PC-9 (cell line): ENCODE measurements at regions of chr2 and their contacts with region 1.

Region 1: DNA sequence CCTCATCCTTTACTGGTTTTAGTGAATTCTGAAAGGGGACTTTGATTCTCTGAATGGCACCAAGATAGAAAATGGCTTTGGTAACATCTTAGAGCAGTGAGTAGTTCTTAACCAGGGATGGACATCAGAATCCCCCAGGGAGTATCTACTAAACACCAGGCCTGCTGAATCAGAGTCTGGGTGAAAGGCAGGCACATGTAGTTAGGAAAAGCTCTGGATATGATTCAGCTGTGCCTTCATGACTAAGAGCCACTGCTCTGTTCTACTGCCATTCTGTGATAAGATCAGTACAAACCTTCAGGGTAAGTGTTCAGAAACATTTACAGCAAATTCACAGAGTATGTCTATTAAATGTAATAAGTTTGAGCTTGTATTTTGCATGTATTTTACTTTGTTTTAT is 46.2 kb upstream of the B3GNT2 start:
- DNase-seq: peak; percentile 20 to 83
- H3K4me3 ChIP-seq: no peak overlapping the region
- H3K27ac ChIP-seq: peak overlapping the region; percentile 69
- H3K4me1 ChIP-seq: peaks cover 39% of the 10 kb centered on the region
- H3K27me3 ChIP-seq: no peaks in the 10 kb centered on the region
- CTCF ChIP-seq: no peak

Region 2: DNA sequence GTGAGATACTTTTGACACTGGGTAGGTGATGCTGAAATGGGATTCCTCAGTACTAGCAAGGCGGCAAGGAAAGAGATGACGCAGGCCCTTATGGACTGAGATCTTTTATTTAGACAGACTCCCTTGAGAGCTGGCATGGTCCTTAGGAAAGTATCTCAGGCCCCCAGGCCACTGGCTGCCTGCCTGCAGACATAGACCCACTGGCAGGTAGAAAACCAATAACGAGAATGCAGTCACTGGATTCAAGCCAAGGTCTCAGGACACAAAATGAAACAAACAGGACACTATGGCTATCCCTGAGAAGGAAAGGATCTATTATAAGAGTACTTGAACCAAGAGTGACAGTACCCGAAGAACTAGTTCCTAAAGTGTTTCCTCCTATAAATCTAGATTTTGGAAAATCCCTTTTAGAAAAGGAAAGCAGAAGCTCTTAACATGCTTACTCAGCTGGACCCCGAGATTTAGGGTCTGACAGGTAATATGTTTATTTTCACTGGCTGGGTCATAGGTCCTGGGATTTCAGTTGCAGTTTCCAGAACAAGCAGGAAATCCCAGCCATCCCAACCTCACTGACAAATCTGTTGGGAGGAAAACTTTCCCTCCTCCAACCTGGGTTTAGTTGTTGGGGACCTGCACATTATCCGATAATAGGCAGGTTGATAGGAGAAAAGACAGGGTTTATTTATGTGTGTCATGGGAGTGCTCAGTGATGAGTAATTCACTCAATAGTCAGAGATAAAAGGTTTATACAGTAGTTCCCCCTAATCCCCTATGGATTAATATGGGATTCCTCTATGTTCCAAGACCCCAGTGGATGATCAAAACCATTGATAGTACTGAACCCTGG is 199.8 kb before region 1 on chr2:
- CTCF ChIA-PET with region 1: no interaction called
- POLR2A ChIA-PET with region 1: no interaction called
- intact Hi-C with region 1: no loop called
- DNase-seq: no peak
- H3K4me3 ChIP-seq: no peak overlapping the region
- H3K27ac ChIP-seq: no peak overlapping the region
- H3K4me1 ChIP-seq: peaks cover 9% of the 10 kb centered on the region; the same call in 1 of the 2 replicates
- H3K27me3 ChIP-seq: no peaks in the 10 kb centered on the region
- CTCF ChIP-seq: no peak

Region 3: DNA sequence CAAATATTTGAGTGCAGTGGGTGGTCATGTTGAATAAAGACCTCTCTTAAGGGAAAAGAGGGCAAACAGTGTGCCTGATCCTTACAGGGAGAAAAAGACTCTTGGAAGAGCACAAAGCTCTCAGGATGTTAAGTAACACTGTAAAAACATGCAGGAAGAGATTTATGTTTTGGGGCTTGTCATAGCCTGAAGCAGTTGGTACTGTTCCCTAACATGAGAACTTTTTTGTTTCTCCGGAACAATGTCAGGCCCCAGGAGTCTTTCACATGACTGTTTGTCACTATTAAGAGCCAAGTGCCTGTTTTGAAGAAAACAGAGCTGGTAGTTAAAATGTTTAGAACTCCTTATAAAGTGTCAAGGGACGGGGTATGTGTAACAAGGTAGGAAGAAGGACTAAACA is 37.5 kb before region 1 on chr2:
- CTCF ChIA-PET with region 1: interaction called, 10 read pairs
- POLR2A ChIA-PET with region 1: interaction called, 4 read pairs
- intact Hi-C with region 1: no loop called
- DNase-seq: no peak
- H3K4me3 ChIP-seq: no peak overlapping the region
- H3K27ac ChIP-seq: no peak overlapping the region
- H3K4me1 ChIP-seq: no peaks in the 10 kb centered on the region
- H3K27me3 ChIP-seq: no peaks in the 10 kb centered on the region
- CTCF ChIP-seq: no peak

Region 4: DNA sequence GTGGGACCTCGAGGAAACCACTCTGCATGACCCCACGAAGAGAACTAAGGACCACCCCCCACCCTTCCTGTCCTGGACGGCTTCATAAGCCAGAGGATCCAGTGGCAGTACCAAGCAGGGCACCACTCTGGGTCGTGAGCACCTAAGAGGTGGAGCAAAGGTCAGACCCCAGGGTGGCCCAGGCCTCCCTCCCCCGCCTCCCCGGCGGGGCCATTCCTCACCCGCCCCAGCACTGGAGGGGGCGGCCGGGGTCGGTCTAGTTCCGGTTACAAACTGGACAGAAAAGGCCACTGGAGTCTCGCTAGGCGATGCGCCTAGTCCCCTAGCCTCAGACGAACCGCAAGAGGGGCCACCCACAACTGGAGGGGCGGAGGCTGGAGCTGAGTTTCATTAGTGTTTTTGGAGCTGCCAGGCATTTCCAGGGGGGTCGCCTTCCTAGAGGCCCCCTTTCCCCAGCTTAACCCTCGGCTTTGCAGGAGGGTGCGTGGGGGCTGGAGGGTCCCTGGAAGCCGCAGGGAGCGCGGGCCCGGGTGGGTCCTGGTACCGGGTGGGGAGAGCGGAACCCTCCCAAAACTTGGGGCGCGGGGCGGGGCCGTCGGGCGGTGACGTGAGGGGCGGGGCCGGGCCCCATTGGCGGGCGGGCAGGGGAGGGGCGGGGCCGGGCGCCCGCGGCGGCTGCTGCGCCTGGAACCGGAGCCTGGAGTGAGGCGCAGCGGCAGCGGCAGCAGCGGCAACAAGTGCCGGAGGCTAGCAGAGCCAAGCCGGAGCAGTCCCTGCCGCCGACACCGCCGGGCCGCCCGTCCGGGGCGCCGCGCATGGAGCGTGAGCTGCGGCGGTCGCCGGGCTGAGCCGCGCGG is 45.9 kb after region 1 on chr2 and contains the start of gene B3GNT2:
- CTCF ChIA-PET with region 1: no interaction called
- POLR2A ChIA-PET with region 1: interaction called, 11 read pairs
- intact Hi-C with region 1: no loop called
- DNase-seq: peak; percentile 56 to 82
- H3K4me3 ChIP-seq: peak within 1 kb of the TSS; percentile 98
- H3K27ac ChIP-seq: peak within 1 kb of the TSS; percentile 70
- H3K4me1 ChIP-seq: peaks cover 29% of the 10 kb centered on the region
- H3K27me3 ChIP-seq: no peaks in the 10 kb centered on the region
- CTCF ChIP-seq: no peak
- total RNA-seq, gene B3GNT2: 30.8 and 30.9 TPM in 2 replicates

Region 5: DNA sequence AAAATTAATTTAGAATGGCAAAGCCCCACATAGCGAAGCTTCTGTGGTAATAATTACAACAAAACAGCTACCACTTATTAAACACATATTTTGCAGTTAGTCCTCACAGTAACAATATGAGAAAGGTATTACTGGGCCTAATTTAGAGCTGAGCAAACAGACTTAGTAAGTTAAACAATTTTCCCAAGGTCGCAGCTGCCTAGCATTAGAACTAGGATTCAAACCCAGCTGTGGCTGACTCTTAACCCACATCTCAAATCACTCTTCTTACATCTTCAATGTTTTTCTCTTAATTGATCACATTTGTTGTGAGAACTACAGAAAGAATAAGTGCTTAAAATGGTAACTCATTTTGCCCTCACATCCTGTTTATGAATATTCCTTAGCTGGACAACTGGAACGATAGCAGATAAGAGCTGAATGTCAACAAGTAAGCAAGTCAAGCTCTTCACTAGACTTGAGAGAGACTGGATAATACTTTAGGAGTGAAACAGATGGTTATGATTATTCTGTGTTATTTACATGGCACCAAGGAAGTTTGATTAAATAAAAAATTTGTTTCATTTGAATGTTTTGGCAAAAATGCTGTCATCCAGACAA is 415.7 kb after region 1 on chr2:
- CTCF ChIA-PET with region 1: no interaction called
- POLR2A ChIA-PET with region 1: interaction called, 13 read pairs
- intact Hi-C with region 1: no loop called
- DNase-seq: no peak
- H3K4me3 ChIP-seq: no peak overlapping the region
- H3K27ac ChIP-seq: no peak overlapping the region
- H3K4me1 ChIP-seq: peaks cover 11% of the 10 kb centered on the region
- H3K27me3 ChIP-seq: no peaks in the 10 kb centered on the region
- CTCF ChIP-seq: no peak